ENCODE measurements at regions of chr16 and their contacts with region 1.

Region 1: GRCh38 chr16:24041826-24042631 is 206.2 kb downstream of the PRKCB start:
- DNase-seq: peak; percentile 82
- H3K4me3 Mint-ChIP-seq: no peak overlapping the region
- H3K27ac Mint-ChIP-seq: no peak overlapping the region
- H3K4me1 Mint-ChIP-seq: peaks cover 7% of the 10 kb centered on the region
- H3K27me3 Mint-ChIP-seq: no peaks in the 10 kb centered on the region

Region 2: GRCh38 chr16:24054741-24055491 is 12.9 kb after region 1 on chr16:
- CTCF ChIA-PET with region 1: interaction called, 12 read pairs
- POLR2A ChIA-PET with region 1: interaction called, 3 read pairs
- DNase-seq: no peak
- H3K4me3 Mint-ChIP-seq: no peak overlapping the region
- H3K27ac Mint-ChIP-seq: no peak overlapping the region
- H3K4me1 Mint-ChIP-seq: peaks cover 8% of the 10 kb centered on the region
- H3K27me3 Mint-ChIP-seq: no peaks in the 10 kb centered on the region

Region 3: DNA sequence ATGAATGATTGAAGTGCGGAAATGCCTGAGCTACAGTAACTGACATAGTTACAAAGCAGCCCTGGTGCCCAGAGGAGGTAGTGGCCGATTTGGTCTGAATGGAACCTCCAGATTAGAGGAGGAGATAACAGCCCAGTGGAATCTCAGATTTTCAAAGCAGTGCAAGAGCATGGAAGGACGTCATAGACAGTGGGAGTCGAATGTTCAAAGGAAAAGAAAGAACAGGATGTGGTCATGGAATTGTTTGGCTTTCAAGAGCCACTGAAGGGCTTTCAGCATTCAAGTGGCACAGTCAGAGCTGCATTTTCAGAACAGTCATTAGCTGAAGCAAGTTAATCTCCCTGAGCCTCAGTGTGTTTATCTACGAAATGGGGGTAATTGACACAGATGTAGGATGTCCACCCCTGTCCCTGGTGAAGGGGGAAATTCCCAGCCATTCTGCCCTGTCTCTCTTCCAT is 109.5 kb after region 1 on chr16:
- CTCF ChIA-PET with region 1: no interaction called
- POLR2A ChIA-PET with region 1: no interaction called
- DNase-seq: no peak
- H3K4me3 Mint-ChIP-seq: no peak overlapping the region
- H3K27ac Mint-ChIP-seq: peak overlapping the region; percentile 7
- H3K4me1 Mint-ChIP-seq: peaks cover 26% of the 10 kb centered on the region
- H3K27me3 Mint-ChIP-seq: no peaks in the 10 kb centered on the region

Region 4: GRCh38 chr16:24178496-24178895 is 136.5 kb after region 1 on chr16:
- CTCF ChIA-PET with region 1: no interaction called
- POLR2A ChIA-PET with region 1: no interaction called
- DNase-seq: peak; percentile 25
- H3K4me3 Mint-ChIP-seq: no peak overlapping the region
- H3K27ac Mint-ChIP-seq: no peak overlapping the region
- H3K4me1 Mint-ChIP-seq: peaks cover 2% of the 10 kb centered on the region
- H3K27me3 Mint-ChIP-seq: no peaks in the 10 kb centered on the region

Region 5: GRCh38 chr16:24253192-24253591 is 211.2 kb after region 1 on chr16:
- CTCF ChIA-PET with region 1: interaction called, 43 read pairs
- POLR2A ChIA-PET with region 1: no interaction called
- DNase-seq: peak; percentile 30
- H3K4me3 Mint-ChIP-seq: no peak overlapping the region
- H3K27ac Mint-ChIP-seq: no peak overlapping the region
- H3K4me1 Mint-ChIP-seq: no peaks in the 10 kb centered on the region
- H3K27me3 Mint-ChIP-seq: peaks cover 42% of the 10 kb centered on the region

Region 6: GRCh38 chr16:24504472-24505345 is 462.7 kb after region 1 on chr16:
- CTCF ChIA-PET with region 1: interaction called, 29 read pairs
- POLR2A ChIA-PET with region 1: no interaction called
- DNase-seq: peak; percentile 64
- H3K4me3 Mint-ChIP-seq: no peak overlapping the region
- H3K27ac Mint-ChIP-seq: no peak overlapping the region
- H3K4me1 Mint-ChIP-seq: peaks cover 4% of the 10 kb centered on the region
- H3K27me3 Mint-ChIP-seq: peaks cover 7% of the 10 kb centered on the region

Measured in activated CD4-positive, alpha-beta memory T cell treated with anti-CD3 and anti-CD28 coated beads, Interleukin-2, amount 10 ng/mL, durations not matched to agents 7 days and 5 days (primary cell).